ENCODE measurements at regions of chr21 and their contacts with region 1.

Region 1: GRCh38 chr21:45016406-45017038 is 57.9 kb upstream of the ADARB1 start:
- DNase-seq: no peak
- H3K4me3 ChIP-seq: no peak overlapping the region
- H3K27ac ChIP-seq: no peak overlapping the region
- H3K4me1 ChIP-seq: peaks cover 13% of the 10 kb centered on the region
- H3K27me3 ChIP-seq: no peaks in the 10 kb centered on the region
- CTCF ChIP-seq: no peak

Region 2: DNA sequence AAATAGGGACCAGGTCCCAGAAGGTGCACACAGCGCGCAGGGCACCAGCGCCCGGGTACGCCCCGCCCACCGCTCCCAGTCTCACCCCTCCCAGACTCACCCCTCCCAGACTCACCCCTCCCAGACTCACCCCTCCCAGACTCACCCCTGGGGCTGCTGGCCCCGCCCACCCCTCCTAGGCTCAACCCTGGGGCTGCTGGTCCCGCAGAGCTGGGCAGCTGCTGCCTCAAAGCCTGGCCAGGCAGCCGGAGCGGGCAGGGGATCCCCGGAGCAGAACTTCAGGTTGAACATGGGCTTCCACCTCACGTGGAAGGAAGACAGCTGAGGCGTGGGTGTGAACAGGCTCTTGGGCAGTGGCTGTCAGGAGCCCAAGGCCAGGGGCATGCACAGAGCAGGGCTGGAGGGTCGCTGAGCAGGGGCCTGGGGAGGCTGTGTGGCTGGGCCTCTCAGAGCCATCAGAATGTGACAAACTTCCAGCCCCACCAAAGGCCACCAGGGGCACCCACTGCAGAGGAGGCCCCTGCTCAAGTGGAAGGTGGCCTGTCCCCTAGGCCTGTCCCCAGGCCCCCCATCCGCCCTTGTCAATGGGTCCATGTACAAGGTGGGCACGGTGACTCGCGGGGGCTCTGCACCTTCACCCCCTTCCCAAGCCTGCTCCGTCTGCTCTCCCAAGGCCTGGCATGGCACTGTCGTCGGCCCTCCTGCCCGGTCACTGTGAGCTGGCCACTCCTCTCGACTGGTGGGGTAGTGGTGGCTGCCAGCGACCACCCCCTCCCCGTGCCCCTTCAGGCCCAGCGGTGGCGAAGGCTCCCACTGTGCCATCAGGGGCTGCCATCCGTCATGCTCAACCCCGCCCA is 178.3 kb before region 1 on chr21:
- CTCF ChIA-PET with region 1: no interaction called
- POLR2A ChIA-PET with region 1: interaction called, 12 read pairs
- intact Hi-C with region 1: no loop called
- DNase-seq: no peak
- H3K4me3 ChIP-seq: no peak overlapping the region
- H3K27ac ChIP-seq: no peak overlapping the region
- H3K4me1 ChIP-seq: no peaks in the 10 kb centered on the region
- H3K27me3 ChIP-seq: no peaks in the 10 kb centered on the region
- CTCF ChIP-seq: no peak

Measured in A673 (cell line).